ENCODE measurements at regions of chr2 and their contacts with region 1.

Region 1: GRCh38 chr2:38535744-38536506 is 66.8 kb downstream of the HNRNPLL start:
- DNase-seq: peak; percentile 95
- ATAC-seq: peak; percentile 94

Region 2: DNA sequence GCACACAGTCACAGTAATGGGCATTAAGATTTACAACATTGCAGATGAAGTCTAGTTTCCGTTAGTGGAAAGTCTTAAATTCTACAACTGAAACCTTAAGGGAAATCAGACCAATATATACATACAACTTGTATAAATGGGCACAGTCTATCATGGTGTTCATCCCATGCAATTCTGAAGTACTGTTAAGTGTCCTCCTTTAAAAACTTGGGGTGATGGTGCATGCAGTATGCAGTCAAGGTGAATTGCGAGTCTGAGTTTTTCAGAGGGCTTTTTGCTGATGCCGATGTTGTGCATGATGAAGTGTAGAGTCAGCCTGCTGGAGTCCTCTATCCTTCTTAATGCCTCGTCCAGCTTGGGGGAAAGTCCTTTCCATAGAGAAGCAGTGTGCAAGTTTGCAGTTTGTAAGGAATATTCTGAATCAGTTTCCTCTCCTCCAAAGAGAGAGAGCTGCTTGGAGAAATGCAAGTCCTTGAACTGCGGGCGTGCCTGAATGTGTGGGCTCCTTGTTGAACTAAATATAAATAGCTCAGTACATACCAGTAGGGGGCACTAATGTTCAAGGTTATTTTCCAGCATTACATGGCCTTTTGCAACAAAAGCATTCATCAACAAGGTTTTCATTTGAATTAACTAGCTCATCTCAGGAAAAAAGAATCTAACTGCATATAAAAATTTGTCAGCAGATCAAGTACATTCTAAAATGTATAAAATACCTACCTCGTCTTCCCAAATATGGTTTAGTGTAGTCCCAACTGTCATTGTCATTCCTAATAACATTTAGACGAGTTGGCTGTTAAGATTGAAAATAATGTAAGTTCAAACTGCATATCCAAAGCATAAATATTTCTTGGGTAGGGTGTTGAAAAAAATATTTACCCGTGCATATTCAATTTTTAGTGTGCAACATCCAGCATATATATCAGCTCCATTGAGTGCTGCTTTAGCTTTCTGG is 45.5 kb after region 1 on chr2:
- intact Hi-C with region 1: no loop called
- DNase-seq: peak; percentile 62
- ATAC-seq: peak; percentile 72

Region 3: GRCh38 chr2:38740851-38741731 is 205.2 kb after region 1 on chr2:
- intact Hi-C with region 1: loop called (anchors 5 kb)
- DNase-seq: no peak
- ATAC-seq: no peak